ENCODE measurements at regions of chr19 and their contacts with region 1.

Region 1: DNA sequence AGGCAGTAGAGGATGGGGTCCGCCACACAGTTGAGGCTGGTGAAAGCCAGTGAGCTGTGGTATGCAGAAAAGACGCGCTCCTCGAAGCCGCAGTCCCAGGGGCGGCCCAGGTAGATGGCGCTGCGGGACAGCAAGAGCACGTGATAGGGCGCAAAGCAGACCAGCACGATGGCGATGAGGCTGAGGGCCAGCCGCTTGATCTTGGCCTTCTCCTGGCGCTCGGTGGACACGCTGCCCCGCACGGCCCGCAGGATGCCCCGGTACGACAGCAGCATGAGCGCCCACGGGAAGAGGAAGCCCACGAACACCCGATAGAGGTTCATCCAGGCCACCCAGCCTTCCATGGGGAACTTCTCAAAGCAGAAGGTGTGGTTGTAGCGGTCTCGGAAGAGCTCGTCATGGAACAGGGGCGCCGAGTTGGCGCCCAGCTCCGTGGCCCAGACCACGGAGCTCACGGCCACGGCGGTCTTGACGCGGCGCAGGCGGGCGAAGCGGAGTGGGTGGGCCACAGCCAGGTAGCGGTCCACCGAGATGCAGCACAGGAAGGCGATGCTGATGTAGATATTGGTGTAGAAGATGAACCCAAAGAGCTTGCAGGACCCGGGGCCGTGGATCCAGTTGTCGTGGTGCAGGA is 6.5 kb upstream of the OPA3 start:
- DNase-seq: peak; percentile 84
- ATAC-seq: peak; percentile 95
- H3K4me3 Mint-ChIP-seq: no peak overlapping the region
- H3K27ac Mint-ChIP-seq: no peak overlapping the region
- H3K4me1 Mint-ChIP-seq: peaks cover 6% of the 10 kb centered on the region
- H3K27me3 Mint-ChIP-seq: peaks cover 60% of the 10 kb centered on the region
- CTCF ChIP-seq: no peak

Region 2: DNA sequence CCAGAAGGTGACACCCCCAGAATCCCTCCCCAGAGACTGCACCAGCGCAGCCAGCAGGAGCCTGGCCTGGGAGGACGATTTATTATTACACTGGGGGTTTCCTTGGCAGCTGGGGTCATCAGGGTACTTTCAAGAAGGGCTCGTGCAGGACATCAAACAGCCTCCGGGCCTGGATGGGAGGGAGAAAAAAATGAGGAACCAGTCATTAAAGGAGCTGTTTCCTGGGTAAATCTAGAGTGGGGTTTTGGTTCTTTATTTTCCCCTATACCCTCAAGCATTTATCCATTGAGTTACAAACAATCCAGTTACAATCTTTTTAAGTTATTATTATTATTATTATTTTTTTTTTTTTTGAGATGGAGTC is 181.6 kb before region 1 on chr19:
- CTCF ChIA-PET with region 1: no interaction called
- POLR2A ChIA-PET with region 1: no interaction called
- DNase-seq: no peak
- ATAC-seq: no peak
- H3K4me3 Mint-ChIP-seq: no peak overlapping the region
- H3K27ac Mint-ChIP-seq: no peak overlapping the region
- H3K4me1 Mint-ChIP-seq: peaks cover 5% of the 10 kb centered on the region; the same call in 1 of the 2 replicates
- H3K27me3 Mint-ChIP-seq: no peaks in the 10 kb centered on the region
- CTCF ChIP-seq: no peak

Region 3: GRCh38 chr19:45423589-45424190 is 167.4 kb before region 1 on chr19 and contains the start of gene ERCC1:
- CTCF ChIA-PET with region 1: no interaction called
- POLR2A ChIA-PET with region 1: no interaction called
- DNase-seq: peak; percentile 100
- ATAC-seq: peak; percentile 90
- H3K4me3 Mint-ChIP-seq: peak within 1 kb of the TSS; percentile 93
- H3K27ac Mint-ChIP-seq: peak within 1 kb of the TSS; percentile 99
- H3K4me1 Mint-ChIP-seq: peaks cover 21% of the 10 kb centered on the region
- H3K27me3 Mint-ChIP-seq: no peaks in the 10 kb centered on the region
- CTCF ChIP-seq: no peak
- total RNA-seq, gene ERCC1: 43.7 to 60.6 TPM (median 60.1 TPM) in 3 replicates

Region 4: DNA sequence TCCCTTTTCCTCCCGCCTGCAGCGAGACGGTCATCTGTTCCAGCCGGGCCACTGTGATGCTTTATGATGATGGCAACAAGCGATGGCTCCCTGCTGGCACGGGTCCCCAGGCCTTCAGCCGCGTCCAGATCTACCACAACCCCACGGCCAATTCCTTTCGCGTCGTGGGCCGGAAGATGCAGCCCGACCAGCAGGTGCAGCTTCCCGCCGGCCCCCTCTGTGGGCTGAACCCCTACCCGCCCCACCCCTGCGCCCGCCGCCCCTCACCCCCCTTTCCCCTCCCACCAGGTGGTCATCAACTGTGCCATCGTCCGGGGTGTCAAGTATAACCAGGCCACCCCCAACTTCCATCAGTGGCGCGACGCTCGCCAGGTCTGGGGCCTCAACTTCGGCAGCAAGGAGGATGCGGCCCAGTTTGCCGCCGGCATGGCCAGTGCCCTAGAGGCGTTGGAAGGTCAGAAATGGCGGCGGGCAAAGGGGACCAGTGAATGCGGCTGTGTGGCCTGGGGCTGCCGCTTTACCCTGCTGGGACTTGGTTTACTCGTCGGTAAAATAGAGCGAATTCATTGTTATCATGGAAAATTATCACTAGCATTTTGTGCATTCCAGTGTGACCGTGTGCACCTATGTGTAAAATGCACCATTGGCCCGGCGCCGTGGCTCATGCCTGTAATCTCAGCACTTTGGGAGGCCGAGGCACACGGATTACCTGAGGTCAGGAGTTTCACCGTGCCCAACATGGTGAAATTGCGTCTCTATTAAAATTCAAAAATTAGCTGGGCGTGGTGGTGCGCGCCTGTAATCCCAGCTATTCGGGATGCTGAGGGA is 73.3 kb before region 1 on chr19:
- CTCF ChIA-PET with region 1: no interaction called
- POLR2A ChIA-PET with region 1: no interaction called
- DNase-seq: no peak
- ATAC-seq: no peak
- H3K4me3 Mint-ChIP-seq: no peak overlapping the region
- H3K27ac Mint-ChIP-seq: no peak overlapping the region; the same call in 1 of the 2 replicates
- H3K4me1 Mint-ChIP-seq: peaks cover 9% of the 10 kb centered on the region
- H3K27me3 Mint-ChIP-seq: no peaks in the 10 kb centered on the region
- CTCF ChIP-seq: no peak

Region 5: DNA sequence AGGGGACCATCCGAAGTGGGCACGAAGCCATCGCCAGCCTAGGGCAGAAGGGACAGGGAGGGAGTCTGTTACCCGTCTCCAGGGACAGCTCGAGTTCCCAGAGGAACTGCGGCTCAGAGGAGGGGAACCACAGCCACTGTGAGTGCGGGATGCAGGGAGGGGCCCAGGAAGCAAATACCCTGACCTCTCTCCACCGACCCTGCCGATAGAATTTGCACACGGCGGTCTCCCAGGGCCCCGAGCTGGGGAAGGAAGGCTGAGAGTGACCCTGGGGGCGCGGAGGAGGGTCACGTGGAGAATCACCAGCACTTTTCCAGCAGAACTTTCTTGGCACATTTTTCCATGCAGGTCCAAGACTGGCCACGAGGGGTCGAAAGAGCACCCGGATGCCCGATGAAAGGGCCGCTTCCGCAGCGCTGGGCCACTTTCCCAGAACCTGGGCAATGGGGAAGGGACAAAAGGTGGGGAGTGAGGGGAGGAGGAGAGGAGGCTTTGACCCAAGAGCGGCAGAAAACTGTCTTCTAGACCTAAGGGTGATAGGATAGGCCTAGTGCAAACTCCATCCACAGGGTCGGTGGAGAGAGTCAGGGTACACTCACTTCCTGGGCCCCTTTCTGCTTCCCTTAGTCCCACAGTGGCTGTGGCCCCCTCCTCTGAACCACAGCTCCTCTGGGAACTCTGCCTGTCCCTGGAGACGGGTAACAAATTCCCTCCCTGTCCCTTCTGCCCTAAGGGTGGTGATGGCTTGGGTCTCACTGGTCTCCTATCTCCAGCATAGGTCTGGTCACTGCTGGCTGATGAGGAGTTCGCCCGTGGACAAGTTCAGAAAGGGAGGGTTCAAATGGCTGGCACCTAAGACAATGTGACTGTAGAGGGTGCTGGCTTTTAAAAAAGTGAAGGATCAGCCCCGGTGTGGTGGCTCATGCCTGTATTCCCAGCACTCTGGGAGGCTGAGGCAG is 16.2 kb after region 1 on chr19:
- CTCF ChIA-PET with region 1: interaction called, 14 read pairs
- POLR2A ChIA-PET with region 1: no interaction called
- DNase-seq: peak; percentile 90
- ATAC-seq: peak; percentile 85
- H3K4me3 Mint-ChIP-seq: peak overlapping the region; percentile 77
- H3K27ac Mint-ChIP-seq: no peak overlapping the region; the same call in 1 of the 2 replicates
- H3K4me1 Mint-ChIP-seq: peaks cover 10% of the 10 kb centered on the region; the same call in 1 of the 2 replicates
- H3K27me3 Mint-ChIP-seq: peaks cover 19% of the 10 kb centered on the region
- CTCF ChIP-seq: peak; percentile 80

Region 6: DNA sequence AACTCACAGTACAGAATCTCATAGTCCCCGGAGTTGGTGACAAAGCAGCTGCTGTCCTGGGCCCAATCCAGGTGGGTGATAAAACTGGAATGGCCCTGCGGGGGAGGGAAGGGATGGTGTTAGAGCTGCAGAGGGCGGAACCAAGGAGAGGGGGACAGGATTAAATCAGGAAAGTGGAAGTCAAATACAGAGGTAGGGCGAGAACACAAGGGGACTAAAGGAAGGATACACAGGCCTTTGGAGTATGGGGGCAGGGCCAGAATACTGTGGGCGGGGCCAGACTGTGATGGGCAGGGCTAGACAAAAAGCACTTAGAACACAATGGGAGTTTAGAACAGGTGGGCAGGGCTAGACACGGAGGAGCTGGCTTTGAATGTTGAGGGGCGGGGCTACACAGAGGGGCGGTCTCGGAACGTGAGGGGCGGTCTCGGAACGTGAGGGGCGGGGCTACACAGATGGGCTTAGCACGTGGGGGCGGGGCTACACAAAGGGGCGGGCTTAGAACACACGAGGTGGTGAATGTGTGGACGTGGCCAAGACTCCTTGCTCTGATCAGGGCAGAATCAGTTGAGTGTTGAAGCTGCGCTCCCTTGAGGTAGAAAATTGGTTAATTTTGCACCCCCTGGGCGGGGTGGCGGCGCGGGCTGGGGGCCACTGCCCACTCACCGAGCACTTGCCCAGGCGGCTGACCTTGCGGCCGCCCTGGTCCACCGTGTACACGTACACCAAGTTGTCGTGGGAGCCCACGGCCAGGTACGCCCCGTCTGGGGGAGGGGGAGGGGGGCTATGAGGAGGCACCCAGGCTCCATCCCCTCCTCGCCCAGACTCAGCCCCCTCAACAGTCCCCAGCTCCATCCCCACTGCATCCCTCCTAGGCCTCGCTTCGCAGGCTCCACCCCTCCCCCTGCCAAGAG is 24.9 kb after region 1 on chr19:
- CTCF ChIA-PET with region 1: interaction called, 12 read pairs
- POLR2A ChIA-PET with region 1: interaction called, 3 read pairs
- DNase-seq: peak; percentile 99
- ATAC-seq: peak; percentile 96
- H3K4me3 Mint-ChIP-seq: peak overlapping the region; percentile 86
- H3K27ac Mint-ChIP-seq: peak overlapping the region; percentile 99
- H3K4me1 Mint-ChIP-seq: 0 out of 2 replicates have a peak, but pooled peaks cover 7% of the 10 kb centered on the region
- H3K27me3 Mint-ChIP-seq: no peaks in the 10 kb centered on the region
- CTCF ChIP-seq: no peak